Activated CD4-positive, alpha-beta T cell treated with anti-CD3 and anti-CD28 coated beads for 36 hours (primary cell): ENCODE measurements at regions of chrX and their contacts with region 1.

Region 1: GRCh38 chrX:120549483-120550452 is 11.0 kb downstream of the CUL4B start:
- DNase-seq: peak; percentile 48
- ATAC-seq: peak; percentile 98
- H3K4me3 Mint-ChIP-seq: no peak overlapping the region
- H3K27ac Mint-ChIP-seq: peak overlapping the region; percentile 16
- H3K4me1 Mint-ChIP-seq: peaks cover 28% of the 10 kb centered on the region
- H3K27me3 Mint-ChIP-seq: no peaks in the 10 kb centered on the region

Region 2: GRCh38 chrX:120485638-120486520 is 63.9 kb before region 1 on chrX:
- CTCF ChIA-PET with region 1: no interaction called
- POLR2A ChIA-PET with region 1: no interaction called
- intact Hi-C with region 1: loop called in 1 of 2 experiments (anchors 10 kb)
- DNase-seq: peak; percentile 64
- ATAC-seq: peak; percentile 82
- H3K4me3 Mint-ChIP-seq: peak overlapping the region; percentile 66
- H3K27ac Mint-ChIP-seq: peak overlapping the region; percentile 87
- H3K4me1 Mint-ChIP-seq: peaks cover 22% of the 10 kb centered on the region
- H3K27me3 Mint-ChIP-seq: no peaks in the 10 kb centered on the region

Region 3: GRCh38 chrX:120514236-120514635 is 35.5 kb before region 1 on chrX:
- CTCF ChIA-PET with region 1: no interaction called
- POLR2A ChIA-PET with region 1: no interaction called
- intact Hi-C with region 1: loop called in 1 of 2 experiments (anchors 5 kb)
- DNase-seq: no peak
- ATAC-seq: no peak
- H3K4me3 Mint-ChIP-seq: no peak overlapping the region
- H3K27ac Mint-ChIP-seq: no peak overlapping the region
- H3K4me1 Mint-ChIP-seq: no peaks in the 10 kb centered on the region
- H3K27me3 Mint-ChIP-seq: no peaks in the 10 kb centered on the region

Region 4: GRCh38 chrX:120677004-120677652 is 127.4 kb after region 1 on chrX:
- CTCF ChIA-PET with region 1: no interaction called
- POLR2A ChIA-PET with region 1: no interaction called
- intact Hi-C with region 1: no loop called
- DNase-seq: peak; percentile 29
- ATAC-seq: peak; percentile 94
- H3K4me3 Mint-ChIP-seq: no peak overlapping the region
- H3K27ac Mint-ChIP-seq: peak overlapping the region; percentile 86
- H3K4me1 Mint-ChIP-seq: peaks cover 34% of the 10 kb centered on the region
- H3K27me3 Mint-ChIP-seq: no peaks in the 10 kb centered on the region

Region 5: DNA sequence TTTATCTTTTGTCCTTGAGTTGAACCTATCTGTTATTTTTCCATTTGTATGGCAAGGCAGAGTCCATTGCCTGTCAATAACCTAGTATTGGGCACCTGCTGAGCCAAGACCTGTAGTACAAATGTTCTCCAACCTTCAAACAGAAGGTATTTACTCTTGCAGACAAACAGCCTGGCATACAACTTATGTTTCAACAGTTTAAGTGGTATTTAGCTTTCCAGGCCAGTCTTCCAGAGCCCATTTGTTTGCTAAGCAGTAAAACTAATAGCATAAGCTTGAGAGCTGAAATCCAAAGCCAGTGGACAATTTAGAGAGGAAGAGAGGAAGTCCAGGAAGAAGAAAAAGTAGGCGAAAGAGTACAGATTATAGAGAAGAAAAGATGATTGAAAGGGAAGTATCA is 1476.9 kb after region 1 on chrX:
- CTCF ChIA-PET with region 1: no interaction called
- POLR2A ChIA-PET with region 1: no interaction called
- intact Hi-C with region 1: no loop called
- DNase-seq: no peak
- ATAC-seq: no peak
- H3K4me3 Mint-ChIP-seq: no peak overlapping the region
- H3K27ac Mint-ChIP-seq: no peak overlapping the region
- H3K4me1 Mint-ChIP-seq: no peaks in the 10 kb centered on the region
- H3K27me3 Mint-ChIP-seq: no peaks in the 10 kb centered on the region